ENCODE measurements at regions of chr9 and their contacts with region 1.

Region 1: DNA sequence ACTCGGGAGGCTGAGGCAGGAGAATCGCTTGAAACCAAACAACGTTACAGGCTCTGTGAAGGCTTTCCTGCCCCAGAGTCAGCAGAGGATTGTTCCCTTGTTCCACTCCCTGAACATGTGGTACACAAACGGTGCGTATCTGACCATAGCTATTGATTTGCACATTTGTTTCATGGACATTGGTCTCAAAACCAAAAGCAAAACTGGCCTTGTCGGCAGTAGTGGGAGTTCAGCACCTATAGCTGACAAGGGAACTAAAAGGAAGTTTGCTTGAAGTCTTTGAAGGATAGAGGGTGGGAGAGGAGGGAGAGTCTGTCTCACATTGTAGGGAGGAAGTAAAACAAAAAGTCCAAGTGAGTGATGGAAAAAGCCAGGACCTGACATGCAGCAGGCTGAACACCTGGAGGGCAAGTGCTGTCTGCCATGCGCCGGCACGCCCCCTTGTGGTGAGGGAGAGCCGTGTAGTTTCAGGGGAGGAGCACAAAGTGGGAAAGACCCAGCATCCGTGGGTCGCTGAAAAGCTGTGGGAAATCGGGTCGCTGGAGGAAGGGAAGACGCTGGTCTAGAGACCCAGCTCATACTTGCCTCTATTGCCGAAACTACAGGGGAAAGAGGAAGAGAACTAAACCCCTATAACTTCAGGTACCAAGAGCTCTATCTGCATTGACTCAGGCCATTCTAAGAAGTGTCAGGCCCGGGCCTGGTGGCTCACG is 58.0 kb downstream of the RAD23B start:
- DNase-seq: peak; percentile 92
- H3K4me3 Mint-ChIP-seq: no peak overlapping the region
- H3K27ac Mint-ChIP-seq: no peak overlapping the region
- H3K4me1 Mint-ChIP-seq: peaks cover 9% of the 10 kb centered on the region
- H3K27me3 Mint-ChIP-seq: peaks cover 2% of the 10 kb centered on the region

Region 2: DNA sequence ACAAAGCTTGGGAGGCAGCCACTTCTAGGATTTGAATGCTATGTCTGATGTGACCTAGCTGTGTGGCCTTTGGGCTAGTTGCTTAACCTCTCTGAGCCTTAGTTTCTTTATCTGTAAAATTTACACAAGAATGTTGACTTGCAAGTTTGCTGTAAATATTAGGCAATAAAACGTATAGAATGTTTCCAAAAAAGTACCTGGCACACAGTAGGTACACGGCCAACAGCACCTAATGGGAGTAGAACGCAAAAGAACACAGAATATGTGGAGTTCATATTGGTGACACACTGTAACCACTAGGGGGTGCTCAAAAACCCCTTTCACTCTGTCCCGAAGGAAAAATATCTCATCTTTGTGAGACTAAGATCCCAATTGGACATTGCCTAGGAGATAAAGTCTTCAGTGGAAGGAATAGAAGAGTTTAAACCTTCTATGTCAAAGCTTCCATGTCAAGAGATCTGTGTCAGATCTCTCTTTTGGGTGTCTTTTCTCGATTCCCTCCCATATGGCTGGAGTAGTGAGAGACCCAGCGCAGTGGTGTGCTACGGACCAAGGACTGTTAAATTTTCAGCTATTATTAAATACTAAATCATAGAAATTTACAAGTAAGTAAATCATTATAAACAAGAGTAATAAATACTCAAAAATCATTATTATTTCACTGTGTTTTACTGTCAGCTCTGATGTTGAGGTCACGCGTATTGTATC is 203.4 kb before region 1 on chr9:
- CTCF ChIA-PET with region 1: interaction called, 24 read pairs
- intact Hi-C with region 1: loop called (anchors 1 kb)
- DNase-seq: peak; percentile 8
- H3K4me3 Mint-ChIP-seq: no peak overlapping the region
- H3K27ac Mint-ChIP-seq: no peak overlapping the region
- H3K4me1 Mint-ChIP-seq: no peaks in the 10 kb centered on the region
- H3K27me3 Mint-ChIP-seq: peaks cover 3% of the 10 kb centered on the region

Region 3: DNA sequence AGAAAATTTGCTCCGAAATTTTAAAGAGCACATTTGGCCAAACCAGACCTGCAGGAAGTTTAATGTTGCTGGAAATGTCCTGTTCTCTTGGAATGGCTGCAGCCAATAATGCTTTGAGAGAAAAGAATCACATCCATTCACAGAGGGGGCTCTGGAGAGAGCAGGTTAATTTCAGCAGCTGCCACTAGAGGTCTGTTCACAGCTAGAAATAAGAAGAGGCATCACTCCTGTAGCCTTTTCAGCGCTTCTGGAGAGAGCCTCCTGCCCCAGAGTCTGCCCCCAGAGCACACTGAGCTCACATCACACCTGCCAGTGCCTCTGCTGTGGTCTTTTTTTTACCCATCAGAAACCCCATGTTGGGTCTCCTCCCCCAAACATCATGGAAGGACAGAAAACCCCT is 182.8 kb before region 1 on chr9:
- CTCF ChIA-PET with region 1: interaction called, 6 read pairs
- intact Hi-C with region 1: loop called (anchors 2 kb)
- DNase-seq: no peak
- H3K4me3 Mint-ChIP-seq: no peak overlapping the region
- H3K27ac Mint-ChIP-seq: no peak overlapping the region
- H3K4me1 Mint-ChIP-seq: no peaks in the 10 kb centered on the region
- H3K27me3 Mint-ChIP-seq: peaks cover 12% of the 10 kb centered on the region

Region 4: DNA sequence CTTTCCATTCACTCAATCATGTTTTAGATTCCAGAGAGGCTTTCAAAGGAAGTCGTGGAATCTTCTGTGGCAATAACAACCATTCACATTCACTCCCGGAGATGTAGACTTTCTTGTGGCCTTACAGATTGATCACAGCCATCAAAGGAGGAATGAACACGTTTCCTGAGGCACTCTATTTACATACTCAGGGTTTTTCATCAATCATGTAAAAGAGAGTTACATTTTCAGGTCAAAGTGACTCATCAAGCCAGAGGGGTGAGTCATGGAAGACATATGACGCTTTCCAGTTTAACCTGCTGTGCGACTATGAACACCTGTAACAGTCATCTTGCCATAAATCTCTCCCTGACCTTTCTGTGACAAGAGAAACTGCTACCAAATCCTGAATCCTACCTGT is 97.3 kb before region 1 on chr9:
- CTCF ChIA-PET with region 1: interaction called, 25 read pairs
- intact Hi-C with region 1: loop called (anchors 1 kb)
- DNase-seq: peak; percentile 79
- H3K4me3 Mint-ChIP-seq: no peak overlapping the region
- H3K27ac Mint-ChIP-seq: peak overlapping the region; percentile 73
- H3K4me1 Mint-ChIP-seq: peaks cover 33% of the 10 kb centered on the region
- H3K27me3 Mint-ChIP-seq: peaks cover 1% of the 10 kb centered on the region

Region 5: GRCh38 chr9:107355394-107355793 is 14.3 kb after region 1 on chr9:
- CTCF ChIA-PET with region 1: interaction called, 12 read pairs
- intact Hi-C with region 1: no loop called
- DNase-seq: no peak
- H3K4me3 Mint-ChIP-seq: no peak overlapping the region
- H3K27ac Mint-ChIP-seq: no peak overlapping the region
- H3K4me1 Mint-ChIP-seq: no peaks in the 10 kb centered on the region
- H3K27me3 Mint-ChIP-seq: peaks cover 17% of the 10 kb centered on the region

Region 6: GRCh38 chr9:107513464-107514100 is 172.5 kb after region 1 on chr9:
- CTCF ChIA-PET with region 1: no interaction called
- intact Hi-C with region 1: no loop called
- DNase-seq: no peak
- H3K4me3 Mint-ChIP-seq: no peak overlapping the region
- H3K27ac Mint-ChIP-seq: no peak overlapping the region
- H3K4me1 Mint-ChIP-seq: no peaks in the 10 kb centered on the region
- H3K27me3 Mint-ChIP-seq: no peaks in the 10 kb centered on the region